CD8-positive, alpha-beta T cell (primary cell): ENCODE measurements at regions of chr17 and their contacts with region 1.

Region 1: GRCh38 chr17:16353317-16354174 is at the start of gene CENPV:
- DNase-seq: peak; percentile 28 to 86 (median 70)
- ATAC-seq: peak; percentile 85
- H3K4me3 ChIP-seq: peak within 1 kb of the TSS; percentile 63 to 79
- H3K4me3 Mint-ChIP-seq: peak within 1 kb of the TSS; percentile 92
- H3K27ac ChIP-seq: peak within 1 kb of the TSS; percentile 47 to 57
- H3K27ac Mint-ChIP-seq: peak within 1 kb of the TSS; percentile 85
- H3K4me1 ChIP-seq: peaks cover 16% of the 10 kb centered on the region
- H3K4me1 Mint-ChIP-seq: peaks cover 28% of the 10 kb centered on the region
- H3K27me3 ChIP-seq: no peaks in the 10 kb centered on the region
- H3K27me3 Mint-ChIP-seq: no peaks in the 10 kb centered on the region
- CTCF ChIP-seq: no peak
- total RNA-seq, gene CENPV: 28.8 to 31.8 TPM

Region 2: GRCh38 chr17:16215273-16215964 is 138.1 kb before region 1 on chr17 and contains the start of gene NCOR1:
- CTCF ChIA-PET with region 1: interaction called, 3 read pairs
- POLR2A ChIA-PET with region 1: interaction called, 9 read pairs
- intact Hi-C with region 1: loop called (anchors 2 kb)
- DNase-seq: peak; percentile 75 to 94 (median 89)
- ATAC-seq: peak; percentile 87
- H3K4me3 ChIP-seq: peak within 1 kb of the TSS; percentile 70 to 83
- H3K4me3 Mint-ChIP-seq: peak within 1 kb of the TSS; percentile 93
- H3K27ac ChIP-seq: peak within 1 kb of the TSS; percentile 71 to 82
- H3K27ac Mint-ChIP-seq: peak within 1 kb of the TSS; percentile 95
- H3K4me1 ChIP-seq: peaks cover 44% of the 10 kb centered on the region
- H3K4me1 Mint-ChIP-seq: peaks cover 56% of the 10 kb centered on the region
- H3K27me3 ChIP-seq: no peaks in the 10 kb centered on the region
- H3K27me3 Mint-ChIP-seq: no peaks in the 10 kb centered on the region
- CTCF ChIP-seq: no peak
- total RNA-seq, gene NCOR1: 119 TPM

Region 3: GRCh38 chr17:16285957-16286640 is 67.4 kb before region 1 on chr17:
- CTCF ChIA-PET with region 1: interaction called, 3 read pairs
- POLR2A ChIA-PET with region 1: interaction called, 11 read pairs
- intact Hi-C with region 1: loop called (anchors 2 to 5 kb)
- DNase-seq: peak; percentile 48 to 91 (median 77)
- ATAC-seq: peak; percentile 93
- H3K4me3 ChIP-seq: peak overlapping the region; percentile 19 to 27
- H3K4me3 Mint-ChIP-seq: peak overlapping the region; percentile 75
- H3K27ac ChIP-seq: peak overlapping the region; percentile 60 to 86
- H3K27ac Mint-ChIP-seq: peak overlapping the region; percentile 99
- H3K4me1 ChIP-seq: peaks cover 49% of the 10 kb centered on the region
- H3K4me1 Mint-ChIP-seq: peaks cover 53% of the 10 kb centered on the region
- H3K27me3 ChIP-seq: no peaks in the 10 kb centered on the region
- H3K27me3 Mint-ChIP-seq: no peaks in the 10 kb centered on the region
- CTCF ChIP-seq: peak; percentile 37

Region 4: GRCh38 chr17:16342979-16343378 is 10.6 kb before region 1 on chr17:
- CTCF ChIA-PET with region 1: interaction called, 8 read pairs
- POLR2A ChIA-PET with region 1: interaction called, 10 read pairs
- intact Hi-C with region 1: no loop called
- DNase-seq: no peak
- ATAC-seq: no peak
- H3K4me3 ChIP-seq: no peak overlapping the region
- H3K4me3 Mint-ChIP-seq: no peak overlapping the region
- H3K27ac ChIP-seq: no peak overlapping the region
- H3K27ac Mint-ChIP-seq: no peak overlapping the region
- H3K4me1 ChIP-seq: no peaks in the 10 kb centered on the region
- H3K4me1 Mint-ChIP-seq: no peaks in the 10 kb centered on the region
- H3K27me3 ChIP-seq: no peaks in the 10 kb centered on the region
- H3K27me3 Mint-ChIP-seq: no peaks in the 10 kb centered on the region
- CTCF ChIP-seq: no peak

Region 5: GRCh38 chr17:16380640-16381495 is 27.3 kb after region 1 on chr17 and contains the start of gene UBB:
- CTCF ChIA-PET with region 1: interaction called, 4 read pairs
- POLR2A ChIA-PET with region 1: interaction called, 19 read pairs
- intact Hi-C with region 1: loop called (anchors 1 to 2 kb)
- DNase-seq: peak; percentile 88 to 99 (median 94)
- ATAC-seq: peak; percentile 91
- H3K4me3 ChIP-seq: peak within 1 kb of the TSS; percentile 77 to 79
- H3K4me3 Mint-ChIP-seq: peak within 1 kb of the TSS; percentile 85
- H3K27ac ChIP-seq: peak within 1 kb of the TSS; percentile 89 to 99
- H3K27ac Mint-ChIP-seq: peak within 1 kb of the TSS; percentile 96
- H3K4me1 ChIP-seq: peaks cover 29% of the 10 kb centered on the region
- H3K4me1 Mint-ChIP-seq: peaks cover 36% of the 10 kb centered on the region
- H3K27me3 ChIP-seq: no peaks in the 10 kb centered on the region
- H3K27me3 Mint-ChIP-seq: no peaks in the 10 kb centered on the region
- CTCF ChIP-seq: no peak
- total RNA-seq, gene UBB: 829 to 863 TPM

Region 6: DNA sequence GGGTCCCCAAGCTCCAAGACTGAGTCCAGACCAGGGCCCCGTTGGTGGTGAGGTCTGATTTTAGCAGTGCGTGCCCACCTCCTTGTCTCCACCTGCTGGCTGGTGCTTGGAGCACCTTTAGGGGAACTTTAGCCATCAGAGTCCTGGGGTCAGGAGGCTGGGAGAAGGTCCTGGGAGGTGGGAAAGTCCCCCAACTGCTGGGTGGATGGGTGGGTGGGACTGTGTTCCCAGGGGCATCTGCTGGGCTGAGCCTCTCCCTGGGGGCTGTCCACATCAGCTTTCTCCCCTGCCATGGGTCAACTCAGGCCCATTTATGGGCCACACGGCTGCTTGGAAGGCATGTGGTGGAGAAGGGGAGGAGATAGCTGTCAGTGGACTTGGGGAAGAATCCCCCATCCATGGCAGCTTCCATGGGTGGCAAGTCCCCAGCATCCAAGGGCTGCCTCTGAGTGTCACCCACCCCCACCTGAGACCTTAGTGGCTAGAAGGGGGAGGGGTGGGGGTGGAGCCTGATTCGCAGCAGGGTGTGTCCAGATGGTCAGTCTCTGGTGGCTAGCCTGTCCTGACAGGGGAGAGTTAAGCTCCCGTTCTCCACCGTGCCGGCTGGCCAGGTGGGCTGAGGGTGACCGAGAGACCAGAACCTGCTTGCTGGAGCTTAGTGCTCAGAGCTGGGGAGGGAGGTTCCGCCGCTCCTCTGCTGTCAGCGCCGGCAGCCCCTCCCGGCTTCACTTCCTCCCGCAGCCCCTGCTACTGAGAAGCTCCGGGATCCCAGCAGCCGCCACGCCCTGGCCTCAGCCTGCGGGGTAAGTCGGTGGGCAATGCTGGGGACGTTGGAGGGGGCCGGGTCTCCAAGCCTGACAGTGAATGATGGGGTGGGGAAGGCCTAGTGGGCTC is 61.7 kb after region 1 on chr17 and contains the start of gene TRPV2:
- CTCF ChIA-PET with region 1: interaction called, 10 read pairs
- POLR2A ChIA-PET with region 1: interaction called, 4 read pairs
- intact Hi-C with region 1: no loop called
- DNase-seq: peak; percentile 23 to 78 (median 64)
- ATAC-seq: peak; percentile 47
- H3K4me3 ChIP-seq: peak within 1 kb of the TSS; percentile 95
- H3K4me3 Mint-ChIP-seq: peak within 1 kb of the TSS; percentile 95
- H3K27ac ChIP-seq: peak within 1 kb of the TSS; percentile 85 to 97
- H3K27ac Mint-ChIP-seq: peak within 1 kb of the TSS; percentile 99
- H3K4me1 ChIP-seq: peaks cover 48% of the 10 kb centered on the region
- H3K4me1 Mint-ChIP-seq: peaks cover 52% of the 10 kb centered on the region
- H3K27me3 ChIP-seq: no peaks in the 10 kb centered on the region
- H3K27me3 Mint-ChIP-seq: no peaks in the 10 kb centered on the region
- CTCF ChIP-seq: peak; percentile 52
- total RNA-seq, gene TRPV2: 37.1 to 37.4 TPM